Aorta (tissue), 5 donors: ENCODE measurements at regions of chr22 and their contacts with region 1.

Region 1: DNA sequence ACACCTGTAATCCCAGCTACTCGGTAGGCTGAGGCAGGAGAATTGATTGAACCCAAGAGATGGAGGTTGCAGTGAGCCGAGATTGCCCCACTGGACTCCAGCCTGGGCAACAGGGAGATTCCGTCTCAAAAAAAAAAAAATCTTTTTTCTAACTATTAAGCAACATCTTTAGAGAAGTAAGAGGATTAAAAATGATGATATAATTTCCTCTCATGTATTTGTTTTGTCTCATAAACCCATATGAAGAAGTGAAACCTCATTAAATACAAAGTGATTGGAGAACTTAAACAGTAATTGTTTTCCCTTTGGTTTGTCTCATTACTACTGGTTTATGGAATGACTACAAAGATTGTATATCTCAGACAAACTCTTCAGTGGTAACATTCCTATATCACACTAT is 20.5 kb downstream of the DMC1 start:
- DNase-seq: no peak
- ATAC-seq: no peak
- H3K4me3 ChIP-seq: no peak overlapping the region
- H3K27ac ChIP-seq: no peak overlapping the region
- H3K4me1 ChIP-seq: no peaks in the 10 kb centered on the region
- H3K27me3 ChIP-seq: no peaks in the 10 kb centered on the region

Region 2: GRCh38 chr22:38485783-38486182 is 63.7 kb before region 1 on chr22:
- intact Hi-C with region 1: no loop called
- DNase-seq: no peak
- ATAC-seq: peak; percentile 17
- H3K4me3 ChIP-seq: no peak overlapping the region
- H3K27ac ChIP-seq: no peak overlapping the region
- H3K4me1 ChIP-seq: no peaks in the 10 kb centered on the region
- H3K27me3 ChIP-seq: no peaks in the 10 kb centered on the region

Region 3: DNA sequence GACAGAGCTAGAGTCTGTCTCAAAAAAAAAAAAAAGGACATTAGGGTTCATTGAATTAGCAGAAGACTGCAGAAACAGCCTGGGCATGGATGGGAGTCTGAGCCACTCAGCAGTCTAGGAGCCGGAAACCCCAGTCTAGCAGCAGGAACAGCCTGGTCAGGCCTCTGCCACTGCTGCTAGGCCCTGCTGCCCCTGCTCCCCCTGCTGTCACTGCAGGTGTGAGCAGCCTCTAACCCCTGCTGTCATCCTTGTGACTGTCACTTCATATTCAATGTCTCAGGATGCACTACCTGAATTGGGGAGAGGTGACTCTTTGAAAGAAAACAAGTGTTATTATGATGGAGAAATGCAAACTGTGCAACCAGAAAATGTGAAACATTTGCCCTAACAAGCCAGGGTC is 36.4 kb before region 1 on chr22:
- intact Hi-C with region 1: loop called in 1 of 2 experiments (anchors 5 kb)
- DNase-seq: no peak
- ATAC-seq: no peak
- H3K4me3 ChIP-seq: no peak overlapping the region
- H3K27ac ChIP-seq: no peak overlapping the region
- H3K4me1 ChIP-seq: no peaks in the 10 kb centered on the region
- H3K27me3 ChIP-seq: no peaks in the 10 kb centered on the region